ENCODE measurements at regions of chr3 and their contacts with region 1.

Region 1: GRCh38 chr3:33883538-33883950 is 85.1 kb downstream of the PDCD6IP start:
- DNase-seq: peak; percentile 16
- H3K4me3 ChIP-seq: no peak overlapping the region
- H3K27ac ChIP-seq: no peak overlapping the region
- H3K4me1 ChIP-seq: peaks cover 14% of the 10 kb centered on the region
- H3K27me3 ChIP-seq: no peaks in the 10 kb centered on the region
- CTCF ChIP-seq: peak; percentile 69 to 73

Region 2: GRCh38 chr3:34260271-34261006 is 376.9 kb after region 1 on chr3:
- CTCF ChIA-PET with region 1: interaction called, 3 read pairs
- dilution Hi-C with region 1: no loop called
- in situ Hi-C with region 1: no loop called
- intact Hi-C with region 1: loop called (anchors 2 kb)
- DNase-seq: peak; percentile 6
- H3K4me3 ChIP-seq: no peak overlapping the region
- H3K27ac ChIP-seq: no peak overlapping the region
- H3K4me1 ChIP-seq: no peaks in the 10 kb centered on the region
- H3K27me3 ChIP-seq: no peaks in the 10 kb centered on the region
- CTCF ChIP-seq: peak; percentile 57 to 71

Region 3: GRCh38 chr3:34387826-34388564 is 504.5 kb after region 1 on chr3:
- CTCF ChIA-PET with region 1: no interaction called
- dilution Hi-C with region 1: no loop called
- in situ Hi-C with region 1: no loop called
- intact Hi-C with region 1: loop called (anchors 5 kb)
- DNase-seq: no peak
- H3K4me3 ChIP-seq: no peak overlapping the region
- H3K27ac ChIP-seq: no peak overlapping the region
- H3K4me1 ChIP-seq: no peaks in the 10 kb centered on the region
- H3K27me3 ChIP-seq: no peaks in the 10 kb centered on the region
- CTCF ChIP-seq: peak in 1 of 2 donors; percentile 10

Region 4: GRCh38 chr3:34683851-34684250 is 800.3 kb after region 1 on chr3:
- CTCF ChIA-PET with region 1: interaction called, 19 read pairs
- dilution Hi-C with region 1: no loop called
- in situ Hi-C with region 1: loop called in 1 of 2 experiments (anchors 25 kb)
- intact Hi-C with region 1: loop called (anchors 1 kb)
- DNase-seq: peak; percentile 34
- H3K4me3 ChIP-seq: no peak overlapping the region
- H3K27ac ChIP-seq: no peak overlapping the region
- H3K4me1 ChIP-seq: no peaks in the 10 kb centered on the region
- H3K27me3 ChIP-seq: no peaks in the 10 kb centered on the region
- CTCF ChIP-seq: peak in 1 of 2 donors; percentile 26